ENCODE measurements at regions of chr1 and their contacts with region 1.

Region 1: DNA sequence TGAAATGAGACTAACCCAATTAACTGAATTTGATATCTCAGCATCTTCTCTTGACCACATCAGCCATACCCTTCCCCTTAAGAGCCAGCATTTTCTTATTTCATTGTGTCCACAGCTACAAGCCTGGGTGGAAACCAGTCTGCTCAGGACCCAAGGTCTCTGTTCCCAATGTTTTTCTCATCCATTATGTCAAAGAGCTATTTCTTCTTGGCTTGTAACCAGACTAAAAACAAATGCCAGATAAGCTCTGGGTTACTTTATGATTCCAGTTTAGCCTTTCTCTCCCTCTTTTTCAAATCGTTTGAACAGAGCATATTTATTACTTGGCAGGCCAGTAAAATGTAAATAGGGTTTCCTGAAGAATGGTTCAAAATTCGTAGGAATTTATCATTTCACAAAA is 109.3 kb upstream of the SPATA6 start:
- DNase-seq: no peak
- ATAC-seq: no peak
- H3K4me3 ChIP-seq: no peak overlapping the region
- H3K27ac ChIP-seq: no peak overlapping the region
- H3K4me1 ChIP-seq: no peaks in the 10 kb centered on the region
- H3K27me3 ChIP-seq: peaks cover 46% of the 10 kb centered on the region
- CTCF ChIP-seq: no peak

Region 2: GRCh38 chr1:48536477-48536876 is 44.8 kb before region 1 on chr1:
- CTCF ChIA-PET with region 1: no interaction called
- POLR2A ChIA-PET with region 1: no interaction called
- intact Hi-C with region 1: loop called (anchors 1 kb)
- DNase-seq: peak; percentile 82
- ATAC-seq: peak; percentile 89
- H3K4me3 ChIP-seq: no peak overlapping the region
- H3K27ac ChIP-seq: no peak overlapping the region
- H3K4me1 ChIP-seq: peaks cover 13% of the 10 kb centered on the region
- H3K27me3 ChIP-seq: no peaks in the 10 kb centered on the region
- CTCF ChIP-seq: no peak

Region 3: DNA sequence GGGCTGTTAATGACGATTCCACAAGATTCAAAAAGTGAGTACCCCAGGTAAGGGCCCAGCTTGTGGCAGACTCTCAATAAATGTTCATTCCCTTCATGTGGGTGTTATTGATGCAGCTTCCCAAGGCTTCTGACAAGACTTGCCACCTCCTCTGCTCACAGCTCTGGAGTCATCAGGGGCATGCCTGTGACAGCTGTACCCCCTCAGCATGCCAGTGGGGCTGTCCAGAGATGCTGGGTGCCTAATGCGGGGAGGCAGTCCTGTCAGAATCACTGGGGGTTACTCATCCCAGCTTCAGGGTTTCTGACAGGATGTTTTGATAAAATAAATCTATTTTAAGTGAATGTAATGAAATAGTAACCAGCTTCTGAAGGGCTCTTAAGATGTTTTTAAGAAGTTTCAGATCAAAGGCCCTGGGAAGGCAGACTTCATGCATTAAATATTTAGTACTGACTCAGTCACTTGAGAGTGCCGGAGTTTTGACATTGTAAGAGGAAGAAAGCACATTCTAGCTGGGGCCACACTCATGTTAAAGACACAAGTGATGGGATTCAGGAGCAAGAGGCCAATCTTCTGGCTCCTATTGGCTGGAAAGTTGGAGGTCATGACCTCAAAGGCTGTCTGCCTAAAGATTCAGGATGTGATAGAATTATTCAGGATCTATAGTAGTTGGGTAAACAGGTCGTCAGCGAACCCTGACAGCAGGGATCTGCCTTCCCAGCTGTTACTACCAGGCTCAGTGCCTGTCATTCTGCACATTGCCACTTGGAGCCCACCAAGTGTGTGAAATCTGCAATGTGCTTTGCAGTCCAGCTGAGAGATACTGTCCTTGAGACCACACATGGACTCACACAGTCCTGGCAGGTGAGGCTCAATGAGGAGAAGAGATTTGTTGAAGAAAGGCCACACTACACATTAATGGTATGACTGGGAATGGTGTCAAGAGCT is 435.0 kb after region 1 on chr1:
- CTCF ChIA-PET with region 1: no interaction called
- POLR2A ChIA-PET with region 1: no interaction called
- intact Hi-C with region 1: no loop called
- DNase-seq: no peak
- ATAC-seq: no peak
- H3K4me3 ChIP-seq: no peak overlapping the region
- H3K27ac ChIP-seq: no peak overlapping the region
- H3K4me1 ChIP-seq: no peaks in the 10 kb centered on the region
- H3K27me3 ChIP-seq: no peaks in the 10 kb centered on the region
- CTCF ChIP-seq: no peak